Right cardiac atrium (tissue), 5 donors: ENCODE measurements at regions of chr9 and their contacts with region 1.

Region 1: GRCh38 chr9:88781628-88782391 is 209.5 kb upstream of the S1PR3 start:
- DNase-seq: peak; percentile 73 to 81 (median 75)
- ATAC-seq: peak; percentile 82 to 83
- H3K4me3 ChIP-seq: no peak overlapping the region
- H3K27ac ChIP-seq: peak overlapping the region; percentile 83
- H3K4me1 ChIP-seq: peaks cover 21% of the 10 kb centered on the region
- H3K27me3 ChIP-seq: no peaks in the 10 kb centered on the region

Region 2: DNA sequence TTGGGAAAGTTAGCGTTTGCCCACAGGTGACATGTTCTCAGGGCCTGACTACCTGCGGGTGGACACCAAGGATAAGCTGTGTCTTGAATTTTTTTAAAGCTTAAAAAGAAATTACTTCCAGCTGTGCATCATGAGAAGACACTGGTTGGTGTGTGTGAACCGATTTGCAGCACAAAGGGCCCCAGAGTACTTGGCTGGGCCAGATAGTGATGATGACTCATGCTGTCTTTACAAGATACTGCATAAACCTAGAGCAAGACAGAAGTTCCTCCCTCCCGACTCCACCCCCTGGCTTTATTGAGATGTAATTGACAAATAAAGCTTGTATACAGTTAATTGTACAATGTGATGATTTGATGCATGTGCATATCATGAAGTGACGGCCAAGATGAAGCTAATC is 34.0 kb before region 1 on chr9:
- intact Hi-C with region 1: no loop called
- DNase-seq: peak in 1 of 3 donors; percentile 46
- ATAC-seq: peak; percentile 69 to 82
- H3K4me3 ChIP-seq: no peak overlapping the region
- H3K27ac ChIP-seq: peak overlapping the region; percentile 47
- H3K4me1 ChIP-seq: peaks cover 2% of the 10 kb centered on the region
- H3K27me3 ChIP-seq: no peaks in the 10 kb centered on the region

Region 3: DNA sequence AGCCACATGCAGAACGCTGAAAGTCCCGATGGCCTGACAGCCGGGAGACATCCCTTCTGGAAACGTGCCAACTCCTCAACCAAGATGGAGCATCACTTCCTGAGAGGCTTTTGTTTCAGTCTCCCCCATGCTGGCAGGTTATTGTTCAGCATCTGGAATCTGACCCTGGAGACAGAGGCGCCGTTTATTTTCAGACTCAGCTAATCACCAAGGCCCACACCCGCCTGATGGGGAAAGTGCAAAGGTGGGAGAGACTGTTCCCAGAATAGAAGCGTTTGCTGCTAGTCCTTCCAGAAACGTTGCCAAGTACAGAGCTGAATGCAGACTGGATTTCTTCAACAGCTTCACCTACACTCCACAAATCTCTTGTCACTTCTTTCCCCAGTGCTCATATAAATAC is 167.6 kb after region 1 on chr9:
- intact Hi-C with region 1: loop called in 1 of 4 experiments (anchors 10 kb)
- DNase-seq: peak; percentile 41 to 72 (median 67)
- ATAC-seq: peak; percentile 79 to 89
- H3K4me3 ChIP-seq: no peak overlapping the region
- H3K27ac ChIP-seq: peak overlapping the region; percentile 69
- H3K4me1 ChIP-seq: peaks cover 19% of the 10 kb centered on the region
- H3K27me3 ChIP-seq: no peaks in the 10 kb centered on the region

Region 4: GRCh38 chr9:88991066-88992034 is 209.5 kb after region 1 on chr9 and contains the start of gene S1PR3:
- intact Hi-C with region 1: loop called (anchors 10 kb)
- DNase-seq: peak; percentile 78 to 89 (median 87)
- ATAC-seq: peak; percentile 86
- H3K4me3 ChIP-seq: peak within 1 kb of the TSS; percentile 83
- H3K27ac ChIP-seq: peak within 1 kb of the TSS; percentile 77
- H3K4me1 ChIP-seq: peaks cover 5% of the 10 kb centered on the region
- H3K27me3 ChIP-seq: no peaks in the 10 kb centered on the region
- total RNA-seq, gene S1PR3: 37.2 to 51.6 (median 38.3) TPM